ENCODE measurements at regions of chr19 and their contacts with region 1.

Region 1: GRCh38 chr19:54325194-54325621 is 12.2 kb upstream of the LILRA5 start:
- DNase-seq: peak; percentile 10
- H3K4me3 ChIP-seq: no peak overlapping the region
- H3K27ac ChIP-seq: no peak overlapping the region
- H3K4me1 ChIP-seq: no peaks in the 10 kb centered on the region
- H3K27me3 ChIP-seq: no peaks in the 10 kb centered on the region
- CTCF ChIP-seq: peak; percentile 64 to 78

Region 2: GRCh38 chr19:54218960-54219661 is 106.1 kb before region 1 on chr19:
- CTCF ChIA-PET with region 1: no interaction called
- dilution Hi-C with region 1: no loop called
- in situ Hi-C with region 1: no loop called
- intact Hi-C with region 1: no loop called
- DNase-seq: no peak
- H3K4me3 ChIP-seq: no peak overlapping the region
- H3K27ac ChIP-seq: no peak overlapping the region
- H3K4me1 ChIP-seq: no peaks in the 10 kb centered on the region
- H3K27me3 ChIP-seq: no peaks in the 10 kb centered on the region
- CTCF ChIP-seq: no peak

Region 3: GRCh38 chr19:54390942-54391577 is 65.9 kb after region 1 on chr19:
- CTCF ChIA-PET with region 1: no interaction called
- dilution Hi-C with region 1: no loop called
- in situ Hi-C with region 1: no loop called
- intact Hi-C with region 1: loop called (anchors 2 kb)
- DNase-seq: peak; percentile 18
- H3K4me3 ChIP-seq: no peak overlapping the region
- H3K27ac ChIP-seq: no peak overlapping the region
- H3K4me1 ChIP-seq: no peaks in the 10 kb centered on the region
- H3K27me3 ChIP-seq: peaks cover 3% of the 10 kb centered on the region
- CTCF ChIP-seq: peak; percentile 66 to 69